Activated naive CD4-positive, alpha-beta T cell treated with anti-CD3 and anti-CD28 coated beads for 36 hours (primary cell): ENCODE measurements at regions of chr4 and their contacts with region 1.

Region 1: DNA sequence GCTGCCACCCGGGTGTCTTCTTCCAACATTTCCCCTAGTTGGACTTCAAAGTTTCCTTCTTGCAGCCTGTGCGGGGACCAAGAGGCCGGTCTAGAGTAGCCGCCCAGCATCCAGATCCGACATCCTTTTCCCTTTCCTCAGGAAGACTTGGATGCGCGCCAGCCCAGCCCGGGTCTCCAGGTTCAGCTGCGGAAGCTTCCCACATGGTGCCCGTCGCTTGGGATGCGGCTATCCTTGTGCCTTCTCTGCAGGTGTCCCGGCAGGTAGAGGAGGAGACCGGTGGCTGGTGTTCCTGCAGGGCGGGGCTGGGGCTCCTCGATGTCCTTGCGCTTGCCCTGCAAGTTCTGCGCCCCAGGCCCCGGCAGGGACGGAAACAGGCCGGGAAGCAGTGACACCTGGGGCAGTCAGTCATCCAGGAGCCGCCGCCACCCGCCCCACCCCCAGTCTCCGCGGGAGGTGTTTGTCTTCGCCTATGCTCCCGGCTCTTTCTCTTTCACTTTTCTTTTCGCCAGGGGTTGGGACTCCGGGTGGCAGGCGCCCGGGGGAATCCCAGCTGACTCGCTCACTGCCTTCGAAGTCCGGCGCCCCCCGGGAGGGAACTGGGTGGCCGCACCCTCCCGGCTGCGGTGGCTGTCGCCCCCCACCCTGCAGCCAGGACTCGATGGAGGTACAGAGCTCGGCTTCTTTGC is at the start of gene IL15:
- DNase-seq: peak; percentile 86
- H3K4me3 Mint-ChIP-seq: peak within 1 kb of the TSS; percentile 89
- H3K27ac Mint-ChIP-seq: no peak within 1 kb of the TSS
- H3K4me1 Mint-ChIP-seq: peaks cover 10% of the 10 kb centered on the region
- H3K27me3 Mint-ChIP-seq: peaks cover 9% of the 10 kb centered on the region
- total RNA-seq, gene IL15: 0.19 to 0.52 TPM

Region 2: DNA sequence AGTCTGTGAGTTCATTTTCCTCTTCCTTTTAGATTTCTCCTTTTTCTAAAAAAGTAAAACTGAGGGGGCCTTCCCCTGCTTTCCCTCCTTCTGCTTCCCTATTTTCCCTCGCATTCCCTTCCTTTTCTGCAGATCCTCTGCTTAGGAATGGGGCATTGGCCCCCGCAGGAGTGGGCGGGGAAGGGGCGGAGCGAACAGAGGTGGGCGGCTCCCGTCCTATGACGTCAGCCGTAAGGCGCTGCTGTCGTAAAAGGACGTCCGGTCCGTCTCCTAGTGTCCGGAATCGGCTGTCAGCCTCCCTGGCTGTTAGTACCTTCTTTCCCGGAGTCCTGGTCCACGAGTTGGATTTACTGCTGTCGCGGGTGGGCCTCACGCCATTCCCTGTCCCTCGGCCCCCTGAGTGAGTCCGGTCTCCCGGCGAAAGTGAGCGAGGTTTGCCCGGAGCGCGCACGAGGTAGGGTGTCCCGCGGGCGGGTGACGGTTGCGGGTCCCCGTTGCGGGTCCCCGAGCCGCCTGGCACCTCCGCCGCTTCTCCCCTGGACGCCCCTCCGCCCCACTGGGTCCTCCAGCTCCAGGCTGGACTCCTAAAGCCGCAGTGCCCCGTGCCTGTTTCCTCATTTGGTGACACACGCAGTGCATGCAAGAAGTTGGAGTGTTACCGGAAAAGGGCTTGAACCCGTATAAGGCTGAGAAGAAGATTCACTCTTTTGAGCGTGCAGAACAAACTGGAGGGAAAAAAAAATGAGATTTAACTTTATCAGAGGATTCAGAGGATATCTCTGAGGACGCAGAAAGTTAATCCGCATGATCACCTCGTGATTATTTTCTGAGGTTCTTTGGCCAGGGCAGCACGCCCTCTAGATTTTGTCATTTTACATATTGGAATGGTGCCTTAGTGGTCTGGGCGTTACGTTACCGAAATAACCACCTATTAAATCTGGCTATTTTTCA is 415.3 kb before region 1 on chr4 and contains the start of gene ZNF330:
- CTCF ChIA-PET with region 1: no interaction called
- intact Hi-C with region 1: loop called (anchors 5 kb)
- DNase-seq: peak; percentile 89
- H3K4me3 Mint-ChIP-seq: peak within 1 kb of the TSS; percentile 94
- H3K27ac Mint-ChIP-seq: peak within 1 kb of the TSS; percentile 94
- H3K4me1 Mint-ChIP-seq: peaks cover 43% of the 10 kb centered on the region
- H3K27me3 Mint-ChIP-seq: no peaks in the 10 kb centered on the region
- total RNA-seq, gene ZNF330: 67.2 to 75.5 TPM

Region 3: DNA sequence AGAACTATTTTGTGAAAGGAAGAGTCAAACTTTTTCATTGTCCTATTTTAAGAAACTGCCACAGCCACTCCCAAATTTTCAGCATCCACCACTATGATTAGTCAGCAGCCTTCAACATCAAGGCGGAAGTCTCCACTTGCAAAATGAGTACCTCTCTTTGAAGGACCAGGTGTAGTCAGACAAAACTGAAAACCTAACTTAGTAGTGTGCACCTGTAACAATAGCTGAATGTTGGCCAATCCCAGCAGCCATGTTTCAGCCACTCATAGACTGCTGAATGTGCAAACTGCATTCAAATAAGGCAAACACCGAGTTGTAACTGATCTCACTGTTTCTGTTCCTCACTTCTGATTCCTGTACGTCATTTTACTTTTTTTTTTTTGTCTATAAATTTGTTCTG is 341.2 kb after region 1 on chr4:
- CTCF ChIA-PET with region 1: no interaction called
- intact Hi-C with region 1: no loop called
- DNase-seq: peak; percentile 5
- H3K4me3 Mint-ChIP-seq: no peak overlapping the region
- H3K27ac Mint-ChIP-seq: no peak overlapping the region
- H3K4me1 Mint-ChIP-seq: peaks cover 2% of the 10 kb centered on the region
- H3K27me3 Mint-ChIP-seq: no peaks in the 10 kb centered on the region